Caco-2 (cell line): ENCODE measurements at regions of chr3 and their contacts with region 1.

Region 1: GRCh38 chr3:169323578-169324451 is 339.7 kb downstream of the MECOM start:
- DNase-seq: no peak
- H3K4me3 ChIP-seq: no peak overlapping the region
- H3K4me3 Mint-ChIP-seq: no peak overlapping the region
- H3K27ac Mint-ChIP-seq: no peak overlapping the region
- H3K4me1 ChIP-seq: peaks cover 23% of the 10 kb centered on the region
- H3K4me1 Mint-ChIP-seq: peaks cover 15% of the 10 kb centered on the region
- H3K27me3 ChIP-seq: no peaks in the 10 kb centered on the region
- H3K27me3 Mint-ChIP-seq: no peaks in the 10 kb centered on the region
- CTCF ChIP-seq: no peak

Region 2: DNA sequence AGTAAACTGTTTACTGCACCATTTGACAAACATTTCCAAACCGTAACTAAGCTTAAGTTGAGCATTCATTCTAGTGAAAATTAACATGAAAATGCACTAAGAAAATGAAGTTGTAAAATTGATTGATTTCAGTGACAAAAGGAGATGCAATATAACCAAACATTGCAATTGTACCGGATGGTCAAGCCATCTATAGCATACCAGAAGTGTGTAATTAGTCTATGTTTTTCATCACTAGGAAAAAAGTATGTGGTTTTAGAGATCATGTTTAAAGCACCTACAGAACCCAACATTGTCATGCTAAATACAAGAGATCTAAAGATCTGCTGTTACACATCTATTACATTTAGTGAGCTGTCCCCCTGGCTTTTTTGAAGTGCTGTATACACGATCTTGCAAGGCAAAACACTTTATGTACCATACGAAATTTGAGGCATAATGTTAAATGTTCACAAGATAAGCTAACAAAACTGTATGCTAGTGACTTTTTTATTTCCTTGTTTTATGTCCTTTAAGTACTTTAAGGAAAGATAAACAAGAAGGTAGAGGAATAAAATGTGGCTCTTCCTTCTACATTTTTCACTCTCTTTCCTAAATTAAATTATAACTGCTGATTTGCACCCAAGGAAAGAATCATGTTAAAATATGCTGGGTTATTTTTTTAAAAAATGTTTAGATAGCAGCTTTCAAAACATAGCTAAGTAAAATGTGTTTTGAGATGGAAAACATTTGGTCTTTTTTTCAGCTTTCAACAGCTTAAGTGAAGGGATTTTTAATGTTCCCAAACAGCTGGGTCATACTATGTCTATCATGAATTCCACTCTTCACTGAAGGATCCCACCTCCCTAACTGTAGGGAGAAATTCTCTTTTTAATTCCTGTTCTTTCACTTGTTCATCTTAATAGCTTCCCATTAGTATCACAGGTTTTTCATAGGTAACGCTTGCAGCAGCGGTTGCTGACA is 158.3 kb before region 1 on chr3:
- CTCF ChIA-PET with region 1: no interaction called
- POLR2A ChIA-PET with region 1: no interaction called
- intact Hi-C with region 1: no loop called
- DNase-seq: no peak
- H3K4me3 ChIP-seq: no peak overlapping the region
- H3K4me3 Mint-ChIP-seq: no peak overlapping the region
- H3K27ac Mint-ChIP-seq: no peak overlapping the region
- H3K4me1 ChIP-seq: no peaks in the 10 kb centered on the region
- H3K4me1 Mint-ChIP-seq: no peaks in the 10 kb centered on the region
- H3K27me3 ChIP-seq: no peaks in the 10 kb centered on the region
- H3K27me3 Mint-ChIP-seq: no peaks in the 10 kb centered on the region
- CTCF ChIP-seq: no peak

Region 3: DNA sequence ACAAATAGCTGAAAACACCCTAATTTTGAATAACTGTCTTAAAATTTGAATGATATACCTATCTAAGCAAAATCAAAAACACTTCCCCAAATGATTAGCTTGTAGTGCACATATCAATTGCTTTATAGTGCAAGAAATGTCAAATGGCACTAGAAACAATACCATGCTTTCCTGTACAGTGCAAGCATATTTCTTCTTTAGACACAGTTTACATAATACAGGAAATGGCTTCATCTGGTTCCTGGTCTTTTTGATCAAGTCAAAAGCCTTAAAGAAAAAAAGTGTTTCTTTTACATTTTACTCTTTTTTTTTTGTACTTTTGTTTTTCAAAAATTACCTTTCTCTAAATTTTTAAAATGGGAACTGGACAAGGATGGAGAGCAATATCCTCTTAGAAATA is 12.4 kb before region 1 on chr3:
- CTCF ChIA-PET with region 1: no interaction called
- POLR2A ChIA-PET with region 1: no interaction called
- intact Hi-C with region 1: loop called (anchors 1 kb)
- DNase-seq: no peak
- H3K4me3 ChIP-seq: no peak overlapping the region
- H3K4me3 Mint-ChIP-seq: no peak overlapping the region
- H3K27ac Mint-ChIP-seq: no peak overlapping the region
- H3K4me1 ChIP-seq: peaks cover 9% of the 10 kb centered on the region
- H3K4me1 Mint-ChIP-seq: peaks cover 13% of the 10 kb centered on the region
- H3K27me3 ChIP-seq: no peaks in the 10 kb centered on the region
- H3K27me3 Mint-ChIP-seq: no peaks in the 10 kb centered on the region
- CTCF ChIP-seq: no peak

Region 4: GRCh38 chr3:169342652-169343505 is 19.1 kb after region 1 on chr3:
- CTCF ChIA-PET with region 1: no interaction called
- POLR2A ChIA-PET with region 1: no interaction called
- intact Hi-C with region 1: no loop called
- DNase-seq: no peak
- H3K4me3 ChIP-seq: no peak overlapping the region
- H3K4me3 Mint-ChIP-seq: no peak overlapping the region
- H3K27ac Mint-ChIP-seq: no peak overlapping the region
- H3K4me1 ChIP-seq: peaks cover 15% of the 10 kb centered on the region
- H3K4me1 Mint-ChIP-seq: no peaks in the 10 kb centered on the region
- H3K27me3 ChIP-seq: no peaks in the 10 kb centered on the region
- H3K27me3 Mint-ChIP-seq: no peaks in the 10 kb centered on the region
- CTCF ChIP-seq: no peak